GM10248 (cell line): ENCODE measurements at regions of chr9 and their contacts with region 1.

Region 1: GRCh38 chr9:127785023-127785932 is 556 bp upstream of the CDK9 start:
- DNase-seq: peak; percentile 88
- CTCF ChIP-seq: peak; percentile 75

Region 2: DNA sequence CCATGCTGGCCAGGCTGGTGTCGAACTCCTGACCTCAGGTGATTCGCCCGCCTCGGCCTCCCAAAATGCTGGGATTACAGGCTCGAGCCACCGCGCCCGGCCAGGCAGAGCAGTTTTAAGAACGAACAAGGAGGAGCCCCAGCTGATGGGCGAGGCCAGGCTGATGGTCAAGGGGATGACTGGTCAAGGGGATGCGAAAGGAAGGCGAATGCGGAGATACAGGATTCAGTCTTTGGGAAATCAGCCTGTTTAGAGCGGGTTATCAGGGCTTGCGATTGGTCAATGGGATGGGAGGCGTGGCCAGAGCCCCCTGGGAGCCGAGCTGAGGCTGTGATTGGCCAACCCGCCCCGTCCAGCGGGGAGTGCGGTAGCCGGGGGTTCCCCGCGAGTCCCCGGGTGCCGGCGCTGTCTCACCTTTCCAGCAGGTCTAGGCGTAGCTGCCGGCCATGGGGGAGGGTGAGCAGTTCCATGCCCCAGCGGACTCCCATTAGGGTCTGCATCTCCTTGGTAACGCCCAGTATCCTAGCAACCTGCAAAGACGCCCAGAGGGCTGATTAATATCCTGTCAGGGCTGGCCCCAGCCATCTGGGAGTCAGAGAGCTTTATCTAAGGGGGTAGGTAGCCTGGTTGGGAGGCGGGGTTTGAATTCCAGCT is 42.7 kb before region 1 on chr9:
- CTCF ChIA-PET with region 1: interaction called, 14 read pairs
- POLR2A ChIA-PET with region 1: no interaction called
- DNase-seq: no peak
- CTCF ChIP-seq: no peak

Region 3: GRCh38 chr9:127763918-127764384 is 21.3 kb before region 1 on chr9:
- CTCF ChIA-PET with region 1: interaction called, 41 read pairs
- POLR2A ChIA-PET with region 1: no interaction called
- DNase-seq: peak; percentile 45
- CTCF ChIP-seq: peak; percentile 62

Region 4: GRCh38 chr9:127770905-127771569 is 14.2 kb before region 1 on chr9:
- CTCF ChIA-PET with region 1: interaction called, 41 read pairs
- POLR2A ChIA-PET with region 1: interaction called, 4 read pairs
- DNase-seq: peak; percentile 97
- CTCF ChIP-seq: no peak

Region 5: DNA sequence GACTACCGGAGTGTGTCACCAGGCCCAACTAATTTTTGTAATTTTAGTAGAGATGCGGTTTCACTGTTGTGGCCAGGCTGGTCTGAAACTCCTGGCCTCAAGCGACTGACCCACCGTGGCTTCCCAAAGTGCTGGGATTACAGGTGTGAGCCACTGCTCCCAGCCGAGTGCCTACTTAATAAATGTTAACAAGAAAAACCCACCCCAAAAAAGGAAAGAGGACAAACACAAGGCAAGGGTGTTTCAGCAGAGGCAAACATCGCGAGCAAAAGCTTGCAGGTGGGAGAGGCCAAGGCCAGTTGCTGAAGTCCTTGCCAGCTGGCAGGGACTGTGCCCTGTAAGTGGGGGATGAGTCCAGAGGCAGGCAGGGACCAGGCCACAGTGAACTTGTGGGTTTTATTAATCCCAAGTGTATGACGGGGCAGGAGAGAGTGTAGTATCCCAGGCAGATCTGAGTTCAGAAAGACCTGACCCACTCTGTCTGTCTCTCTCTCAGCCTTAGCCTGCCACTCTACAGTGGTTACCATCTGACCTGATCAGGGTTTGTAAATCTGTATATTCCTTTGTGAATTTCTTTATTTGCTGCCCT is 11.0 kb after region 1 on chr9:
- CTCF ChIA-PET with region 1: interaction called, 21 read pairs
- POLR2A ChIA-PET with region 1: interaction called, 6 read pairs
- DNase-seq: no peak
- CTCF ChIP-seq: no peak

Region 6: DNA sequence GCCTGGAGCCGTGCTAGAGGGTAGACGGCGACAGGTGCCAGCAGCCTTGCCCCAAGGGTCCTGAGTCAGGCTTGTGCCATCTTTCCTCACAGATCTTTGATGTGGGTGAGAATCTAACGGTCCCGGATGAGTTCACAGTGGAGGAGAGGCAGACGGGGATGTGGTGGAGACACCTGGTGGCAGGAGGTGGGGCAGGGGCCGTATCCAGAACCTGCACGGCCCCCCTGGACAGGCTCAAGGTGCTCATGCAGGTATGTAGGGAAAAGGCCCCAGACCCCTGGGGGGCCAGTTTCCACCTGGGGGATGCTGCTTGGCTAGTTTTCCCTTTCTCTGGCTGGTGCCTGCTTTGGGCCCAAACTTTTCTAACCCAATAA is 318.3 kb after region 1 on chr9:
- CTCF ChIA-PET with region 1: no interaction called
- POLR2A ChIA-PET with region 1: no interaction called
- DNase-seq: no peak
- CTCF ChIP-seq: peak; percentile 6